Common myeloid progenitor, CD34-positive (primary cell): ENCODE measurements at regions of chr15 and their contacts with region 1.

Region 1: GRCh38 chr15:73704869-73705645 is 20.9 kb downstream of the CD276 start:
- DNase-seq: peak; percentile 60 to 76 (median 70)
- H3K4me3 ChIP-seq: no peak overlapping the region
- H3K27ac ChIP-seq: no peak overlapping the region
- H3K4me1 ChIP-seq: no peaks in the 10 kb centered on the region
- H3K27me3 ChIP-seq: peaks cover 0 to 5% (median 0%) of the 10 kb centered on the region in 5 experiments

Region 2: GRCh38 chr15:73283366-73283962 is 421.6 kb before region 1 on chr15:
- CTCF ChIA-PET with region 1: interaction called, 11 read pairs
- POLR2A ChIA-PET with region 1: no interaction called
- DNase-seq: no peak
- H3K4me3 ChIP-seq: no peak overlapping the region
- H3K27ac ChIP-seq: no peak overlapping the region
- H3K4me1 ChIP-seq: peaks cover 0 to 7% (median 0%) of the 10 kb centered on the region in 4 experiments
- H3K27me3 ChIP-seq: peaks cover 0 to 10% (median 0%) of the 10 kb centered on the region in 5 experiments

Region 3: DNA sequence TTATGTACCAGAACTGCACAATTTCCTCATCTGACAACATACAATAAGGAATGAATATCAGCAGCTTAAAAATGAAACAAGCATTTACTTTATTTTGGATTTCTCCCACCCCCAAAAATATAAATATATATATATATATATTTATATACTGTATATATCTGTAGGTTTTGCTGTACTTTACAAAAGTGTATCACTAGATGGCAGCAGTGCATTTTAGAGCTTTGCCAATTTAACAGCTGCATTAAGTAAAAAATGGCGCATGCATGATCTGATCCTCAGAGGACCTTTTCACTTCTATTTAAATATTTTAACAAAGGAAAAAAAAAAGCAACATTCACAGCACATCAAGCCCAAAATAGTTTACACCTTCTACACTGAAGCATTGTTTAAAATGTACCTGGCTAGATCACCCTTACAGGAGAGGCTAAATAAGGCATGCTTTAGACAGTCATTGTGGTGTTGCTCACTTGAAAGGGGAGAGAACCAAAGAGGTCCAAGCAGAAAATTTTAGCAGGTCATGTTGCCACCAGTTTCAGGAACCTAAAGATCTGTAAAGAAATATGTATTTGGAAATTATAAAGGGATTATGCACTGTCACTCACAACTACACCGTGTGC is 144.4 kb before region 1 on chr15:
- CTCF ChIA-PET with region 1: interaction called, 72 read pairs
- POLR2A ChIA-PET with region 1: no interaction called
- DNase-seq: peak; percentile 77 to 90 (median 87)
- H3K4me3 ChIP-seq: no peak overlapping the region
- H3K27ac ChIP-seq: no peak overlapping the region
- H3K4me1 ChIP-seq: peaks cover 0 to 15% (median 7%) of the 10 kb centered on the region in 4 experiments
- H3K27me3 ChIP-seq: no peaks in the 10 kb centered on the region

Region 4: GRCh38 chr15:73717802-73718201 is 12.7 kb after region 1 on chr15:
- CTCF ChIA-PET with region 1: interaction called, 10 read pairs
- POLR2A ChIA-PET with region 1: no interaction called
- DNase-seq: no peak
- H3K4me3 ChIP-seq: no peak overlapping the region
- H3K27ac ChIP-seq: no peak overlapping the region
- H3K4me1 ChIP-seq: peaks cover 0 to 7% (median 0%) of the 10 kb centered on the region in 4 experiments
- H3K27me3 ChIP-seq: peaks cover 0 to 8% (median 0%) of the 10 kb centered on the region in 5 experiments